A673 (cell line): ENCODE measurements at regions of chr10 and their contacts with region 1.

Region 1: GRCh38 chr10:106740071-106740470 is 424.4 kb downstream of the SORCS1 start:
- DNase-seq: no peak
- H3K4me3 ChIP-seq: no peak overlapping the region
- H3K27ac ChIP-seq: no peak overlapping the region
- H3K4me1 ChIP-seq: no peaks in the 10 kb centered on the region
- H3K27me3 ChIP-seq: no peaks in the 10 kb centered on the region
- CTCF ChIP-seq: no peak

Region 2: GRCh38 chr10:106296750-106297392 is 443.2 kb before region 1 on chr10:
- CTCF ChIA-PET with region 1: no interaction called
- POLR2A ChIA-PET with region 1: interaction called, 14 read pairs
- intact Hi-C with region 1: no loop called
- DNase-seq: no peak
- H3K4me3 ChIP-seq: no peak overlapping the region
- H3K27ac ChIP-seq: no peak overlapping the region
- H3K4me1 ChIP-seq: no peaks in the 10 kb centered on the region
- H3K27me3 ChIP-seq: no peaks in the 10 kb centered on the region
- CTCF ChIP-seq: no peak